Activated CD4-positive, alpha-beta memory T cell treated with anti-CD3 and anti-CD28 coated beads, Interleukin-2, amount 10 ng/mL, durations not matched to agents 7 days and 5 days (primary cell): ENCODE measurements at regions of chr10 and their contacts with region 1.

Region 1: DNA sequence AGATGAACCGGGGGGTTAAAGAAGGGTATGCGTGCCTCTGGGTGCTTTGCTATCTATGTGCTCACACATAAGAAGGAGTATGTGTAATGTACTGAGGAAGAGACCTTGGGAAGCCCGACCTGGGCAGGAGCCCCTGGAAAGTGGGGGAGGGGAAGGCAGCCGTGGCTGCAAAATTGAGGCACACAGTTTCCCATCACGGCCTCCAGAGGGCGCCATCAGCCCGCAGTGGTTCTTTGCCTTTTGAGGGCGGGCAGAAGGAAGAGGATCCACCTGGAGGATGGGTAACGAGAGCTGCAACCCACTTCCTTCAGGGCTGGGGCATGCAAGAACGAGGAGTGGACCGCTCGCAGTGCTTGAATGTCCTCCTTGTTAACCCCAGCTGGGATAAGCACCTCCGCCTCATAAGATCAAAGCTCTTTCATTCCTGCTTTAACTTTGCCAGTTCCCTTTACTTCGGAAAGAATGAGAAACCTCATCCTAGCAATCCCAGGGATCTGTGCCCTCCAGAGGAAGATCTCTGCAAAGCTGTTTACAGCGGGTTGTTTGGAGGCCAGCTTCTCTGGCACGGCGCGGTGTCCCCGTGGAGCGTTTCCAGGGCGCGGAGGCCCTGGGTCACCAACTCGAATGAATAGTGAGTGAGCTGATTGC is 77.9 kb downstream of the PCGF5 start:
- DNase-seq: peak; percentile 85
- H3K4me3 Mint-ChIP-seq: peak overlapping the region; percentile 40
- H3K27ac Mint-ChIP-seq: peak overlapping the region; percentile 9
- H3K4me1 Mint-ChIP-seq: peaks cover 10% of the 10 kb centered on the region
- H3K27me3 Mint-ChIP-seq: peaks cover 15% of the 10 kb centered on the region

Region 2: DNA sequence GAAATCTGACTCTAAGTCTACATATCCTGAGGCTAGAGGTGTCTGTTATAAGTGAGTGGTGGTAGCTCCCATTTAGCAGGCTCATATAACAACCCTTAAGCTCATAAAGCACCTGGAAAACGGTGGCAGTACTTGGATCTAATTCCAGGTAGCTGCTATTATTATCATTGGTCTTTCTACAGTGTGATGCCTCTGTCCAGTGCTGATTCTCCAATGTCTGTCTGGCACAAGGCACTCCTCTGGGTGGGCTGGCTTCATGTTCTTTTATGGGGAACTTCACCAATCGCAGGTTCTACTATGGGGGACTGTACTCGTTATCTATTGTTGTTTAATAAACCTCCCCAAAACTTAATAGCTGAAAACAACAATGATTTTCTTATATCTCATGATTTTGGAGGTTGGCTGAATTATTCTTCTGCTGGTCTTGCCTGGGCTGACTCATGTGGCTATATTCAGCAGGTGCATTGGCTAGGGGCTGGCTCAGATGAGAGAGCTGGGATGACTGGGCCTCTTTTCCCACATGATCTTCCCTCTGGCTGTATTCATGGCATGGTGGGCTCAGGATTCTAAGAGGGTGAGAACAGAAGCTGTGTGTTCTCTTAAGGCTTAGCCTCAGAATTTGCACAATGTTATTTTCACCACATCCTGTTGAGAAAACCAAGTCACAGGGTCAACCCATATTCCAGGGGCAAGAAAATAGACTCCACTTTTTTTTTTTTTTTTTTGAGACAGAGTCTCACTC is 170.8 kb before region 1 on chr10:
- CTCF ChIA-PET with region 1: no interaction called
- POLR2A ChIA-PET with region 1: no interaction called
- DNase-seq: no peak
- H3K4me3 Mint-ChIP-seq: no peak overlapping the region
- H3K27ac Mint-ChIP-seq: no peak overlapping the region
- H3K4me1 Mint-ChIP-seq: peaks cover 4% of the 10 kb centered on the region
- H3K27me3 Mint-ChIP-seq: peaks cover 13% of the 10 kb centered on the region

Region 3: GRCh38 chr10:91287276-91287675 is 11.1 kb before region 1 on chr10:
- CTCF ChIA-PET with region 1: interaction called, 33 read pairs
- POLR2A ChIA-PET with region 1: no interaction called
- DNase-seq: no peak
- H3K4me3 Mint-ChIP-seq: no peak overlapping the region
- H3K27ac Mint-ChIP-seq: no peak overlapping the region
- H3K4me1 Mint-ChIP-seq: no peaks in the 10 kb centered on the region
- H3K27me3 Mint-ChIP-seq: no peaks in the 10 kb centered on the region

Region 4: GRCh38 chr10:91632671-91633550 is 334.6 kb after region 1 on chr10 and contains the start of gene PPP1R3C:
- CTCF ChIA-PET with region 1: interaction called, 65 read pairs
- POLR2A ChIA-PET with region 1: no interaction called
- DNase-seq: peak; percentile 56
- H3K4me3 Mint-ChIP-seq: peak within 1 kb of the TSS; percentile 54
- H3K27ac Mint-ChIP-seq: no peak within 1 kb of the TSS
- H3K4me1 Mint-ChIP-seq: peaks cover 7% of the 10 kb centered on the region
- H3K27me3 Mint-ChIP-seq: peaks cover 49% of the 10 kb centered on the region
- total RNA-seq, gene PPP1R3C: 0.23 TPM in 1 of 2 experiments, not detected in the other

Region 5: DNA sequence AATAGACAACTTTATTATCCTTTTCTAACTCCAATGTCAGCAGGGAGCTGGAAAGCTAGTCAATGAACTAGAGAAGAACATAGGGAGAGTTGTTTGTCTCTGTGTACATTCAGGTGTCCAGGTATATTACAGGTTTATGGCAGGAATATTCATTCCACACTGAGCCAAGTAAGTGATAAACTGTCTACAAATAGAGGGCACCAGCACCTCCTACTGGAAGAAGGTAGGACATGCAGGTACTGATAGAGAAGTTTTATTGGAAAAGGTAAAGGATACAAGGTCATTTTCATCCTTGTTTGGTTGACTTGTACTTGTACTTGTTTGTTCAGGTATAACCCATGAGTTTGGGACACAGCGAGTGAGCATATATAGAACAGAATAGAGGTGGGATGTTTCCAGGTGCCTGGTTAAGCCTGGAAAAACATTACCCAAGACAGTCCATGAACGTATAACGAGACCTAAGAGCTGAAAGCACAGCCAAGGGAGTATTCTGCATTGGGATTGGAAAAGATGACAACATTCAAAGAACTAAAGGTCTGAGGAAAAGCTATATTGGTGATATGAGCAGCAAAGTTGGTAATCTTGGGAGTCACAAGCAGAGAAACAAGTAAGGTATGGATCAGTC is 395.9 kb after region 1 on chr10:
- CTCF ChIA-PET with region 1: interaction called, 11 read pairs
- POLR2A ChIA-PET with region 1: no interaction called
- DNase-seq: no peak
- H3K4me3 Mint-ChIP-seq: no peak overlapping the region
- H3K27ac Mint-ChIP-seq: no peak overlapping the region
- H3K4me1 Mint-ChIP-seq: peaks cover 5% of the 10 kb centered on the region
- H3K27me3 Mint-ChIP-seq: peaks cover 3% of the 10 kb centered on the region